Activated CD4-positive, alpha-beta T cell treated with anti-CD3 and anti-CD28 coated beads for 36 hours (primary cell): ENCODE measurements at regions of chr1 and their contacts with region 1.

Region 1: DNA sequence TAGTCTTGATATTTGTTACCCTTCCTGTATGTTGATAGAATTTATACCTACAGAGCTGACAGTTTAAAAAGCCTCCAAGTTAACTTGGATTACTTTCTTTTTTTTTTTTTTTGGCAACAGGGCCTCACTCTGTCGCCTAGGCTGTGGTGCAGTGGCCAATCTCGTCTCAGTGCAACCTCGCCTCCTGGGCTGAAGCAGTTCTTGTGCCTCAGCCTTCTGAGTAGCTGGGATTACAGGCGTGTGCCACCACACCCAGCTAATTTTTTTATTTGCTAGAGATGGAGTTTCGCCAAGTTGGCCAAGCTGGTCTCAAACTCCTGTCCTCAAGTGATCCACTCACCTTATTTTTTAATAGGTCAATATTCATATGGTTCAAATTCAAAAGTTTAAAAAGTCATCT is 32.7 kb downstream of the WDTC1 start:
- DNase-seq: no peak
- ATAC-seq: no peak
- H3K4me3 Mint-ChIP-seq: no peak overlapping the region
- H3K27ac Mint-ChIP-seq: no peak overlapping the region
- H3K4me1 Mint-ChIP-seq: peaks cover 3% of the 10 kb centered on the region
- H3K27me3 Mint-ChIP-seq: no peaks in the 10 kb centered on the region

Region 2: GRCh38 chr1:27218736-27219135 is 48.4 kb before region 1 on chr1:
- CTCF ChIA-PET with region 1: no interaction called
- POLR2A ChIA-PET with region 1: interaction called, 3 read pairs
- intact Hi-C with region 1: loop called in 1 of 2 experiments (anchors 5 kb)
- DNase-seq: no peak
- ATAC-seq: no peak
- H3K4me3 Mint-ChIP-seq: no peak overlapping the region
- H3K27ac Mint-ChIP-seq: no peak overlapping the region
- H3K4me1 Mint-ChIP-seq: no peaks in the 10 kb centered on the region
- H3K27me3 Mint-ChIP-seq: no peaks in the 10 kb centered on the region

Region 3: GRCh38 chr1:27321813-27322577 is 54.8 kb after region 1 on chr1 and contains the start of gene TMEM222:
- CTCF ChIA-PET with region 1: no interaction called
- POLR2A ChIA-PET with region 1: no interaction called
- intact Hi-C with region 1: no loop called
- DNase-seq: peak; percentile 99
- ATAC-seq: peak; percentile 98
- H3K4me3 Mint-ChIP-seq: peak within 1 kb of the TSS; percentile 94
- H3K27ac Mint-ChIP-seq: peak within 1 kb of the TSS; percentile 90
- H3K4me1 Mint-ChIP-seq: peaks cover 41% of the 10 kb centered on the region
- H3K27me3 Mint-ChIP-seq: no peaks in the 10 kb centered on the region
- total RNA-seq, gene TMEM222: 27.5 to 31.2 TPM

Region 4: DNA sequence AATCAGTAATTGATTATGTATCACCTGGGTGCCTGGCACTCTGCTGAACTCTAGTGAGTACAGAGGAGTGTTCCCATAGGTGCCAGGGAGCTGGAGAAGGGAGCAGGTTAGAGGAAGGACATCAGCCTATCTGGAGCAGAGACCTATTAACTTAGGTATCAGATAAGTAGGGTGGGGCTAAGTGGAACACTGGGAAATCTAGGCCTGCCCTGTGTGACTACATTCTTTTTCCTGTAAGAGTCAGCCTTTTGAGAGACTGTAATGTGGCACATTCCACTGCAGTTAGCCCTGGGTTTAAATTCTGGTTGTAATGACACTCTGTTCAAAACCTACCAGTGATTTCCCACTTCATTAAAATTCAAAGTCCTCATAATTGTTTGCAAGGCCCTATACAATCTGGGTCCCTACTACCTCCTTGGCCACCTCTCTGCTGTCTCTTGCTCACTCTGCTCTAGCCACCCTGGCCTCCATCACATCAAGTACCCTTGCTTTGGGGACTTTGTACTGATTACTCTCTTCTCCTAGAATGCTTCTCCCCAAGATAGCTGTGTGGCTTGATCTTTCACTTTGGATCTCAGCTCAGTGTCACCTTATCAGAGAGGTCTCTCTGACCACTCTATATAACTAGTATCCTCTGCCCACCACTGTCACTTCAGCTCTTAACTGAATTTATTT is 518.8 kb after region 1 on chr1:
- CTCF ChIA-PET with region 1: no interaction called
- POLR2A ChIA-PET with region 1: no interaction called
- intact Hi-C with region 1: no loop called
- DNase-seq: no peak
- ATAC-seq: no peak
- H3K4me3 Mint-ChIP-seq: no peak overlapping the region
- H3K27ac Mint-ChIP-seq: peak overlapping the region; percentile 22
- H3K4me1 Mint-ChIP-seq: peaks cover 9% of the 10 kb centered on the region
- H3K27me3 Mint-ChIP-seq: no peaks in the 10 kb centered on the region